Gastrocnemius medialis (tissue), 4 donors: ENCODE measurements at regions of chr9 and their contacts with region 1.

Region 1: GRCh38 chr9:35426627-35427026 is 63.3 kb upstream of the RUSC2 start:
- DNase-seq: no peak
- ATAC-seq: no peak
- H3K4me3 ChIP-seq: no peak overlapping the region
- H3K27ac ChIP-seq: no peak overlapping the region
- H3K4me1 ChIP-seq: peaks cover 0 to 4% of the 10 kb centered on the region in 2 donors
- H3K27me3 ChIP-seq: no peaks in the 10 kb centered on the region
- CTCF ChIP-seq: no peak
- POLR2A ChIP-seq: no peak

Region 2: GRCh38 chr9:35138682-35139470 is 287.8 kb before region 1 on chr9:
- in situ Hi-C with region 1: loop called in 1 of 4 experiments (anchors 25 kb)
- intact Hi-C with region 1: no loop called
- DNase-seq: no peak
- ATAC-seq: no peak
- H3K4me3 ChIP-seq: no peak overlapping the region
- H3K27ac ChIP-seq: no peak overlapping the region
- H3K4me1 ChIP-seq: no peaks in the 10 kb centered on the region
- H3K27me3 ChIP-seq: no peaks in the 10 kb centered on the region
- CTCF ChIP-seq: no peak
- POLR2A ChIP-seq: no peak

Region 3: DNA sequence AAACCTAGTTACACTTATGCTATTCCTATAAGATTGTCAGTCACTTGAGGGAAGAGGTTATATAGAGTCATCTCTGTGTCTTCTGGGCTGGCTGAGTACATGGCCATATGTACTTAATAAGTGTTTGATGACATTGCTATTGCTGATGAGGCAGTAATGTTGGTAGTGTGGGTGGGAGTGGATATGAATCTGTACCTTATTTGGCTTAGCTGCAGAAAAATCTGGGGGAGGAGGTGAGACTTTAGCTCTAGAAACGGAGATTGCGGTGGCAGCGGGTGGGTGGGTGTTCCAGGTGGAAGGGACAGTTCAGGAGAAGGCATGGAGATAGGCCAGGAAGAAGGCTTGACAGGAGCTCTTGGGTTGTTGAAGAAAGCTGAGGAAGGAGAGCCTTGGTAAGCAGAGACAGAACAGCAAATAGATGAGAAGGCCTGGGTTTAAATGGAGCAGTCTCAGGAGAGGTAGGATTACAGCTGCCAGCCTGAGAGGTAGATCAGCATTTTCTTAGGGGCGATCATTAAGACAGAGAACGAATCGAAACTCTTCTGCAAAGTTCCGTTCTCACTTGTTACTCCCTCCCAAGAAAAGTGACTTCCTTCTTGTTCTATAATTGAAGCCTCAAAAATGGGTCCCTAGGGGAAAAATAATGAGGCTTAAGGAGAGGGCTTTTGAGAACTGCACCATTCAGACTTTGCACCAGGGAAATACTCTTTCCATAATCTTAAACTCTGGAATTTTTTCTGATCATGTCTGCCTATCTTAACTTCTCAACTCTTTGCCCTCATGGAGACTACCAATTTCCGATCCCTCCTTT is 104.3 kb before region 1 on chr9:
- in situ Hi-C with region 1: no loop called
- intact Hi-C with region 1: no loop called
- DNase-seq: no peak
- ATAC-seq: no peak
- H3K4me3 ChIP-seq: no peak overlapping the region
- H3K27ac ChIP-seq: no peak overlapping the region
- H3K4me1 ChIP-seq: peaks cover 0 to 4% of the 10 kb centered on the region in 2 donors
- H3K27me3 ChIP-seq: no peaks in the 10 kb centered on the region
- CTCF ChIP-seq: no peak
- POLR2A ChIP-seq: no peak